ENCODE measurements at regions of chr4 and their contacts with region 1.

Region 1: GRCh38 chr4:75653845-75654503 is 19.2 kb downstream of the G3BP2 start:
- DNase-seq: peak in 3 of 14 experiments; percentile 27 to 34 (median 29)
- ATAC-seq: no peak
- H3K4me3 ChIP-seq: no peak overlapping the region
- H3K4me3 Mint-ChIP-seq: no peak overlapping the region
- H3K27ac ChIP-seq: peak overlapping the region in 1 of 2 donors; percentile 9
- H3K27ac Mint-ChIP-seq: peak overlapping the region; percentile 78
- H3K4me1 ChIP-seq: peaks cover 5% of the 10 kb centered on the region
- H3K4me1 Mint-ChIP-seq: peaks cover 53% of the 10 kb centered on the region
- H3K27me3 ChIP-seq: no peaks in the 10 kb centered on the region
- H3K27me3 Mint-ChIP-seq: no peaks in the 10 kb centered on the region
- CTCF ChIP-seq: peak; percentile 29

Region 2: GRCh38 chr4:75698162-75698962 is 44.4 kb after region 1 on chr4:
- CTCF ChIA-PET with region 1: interaction called, 3 read pairs
- POLR2A ChIA-PET with region 1: no interaction called
- intact Hi-C with region 1: loop called in 1 of 2 experiments (anchors 5 kb)
- DNase-seq: peak in 3 of 14 experiments; percentile 41 to 62 (median 57)
- ATAC-seq: peak; percentile 20
- H3K4me3 ChIP-seq: no peak overlapping the region
- H3K4me3 Mint-ChIP-seq: no peak overlapping the region
- H3K27ac ChIP-seq: peak overlapping the region; percentile 15 to 35
- H3K27ac Mint-ChIP-seq: peak overlapping the region; percentile 52
- H3K4me1 ChIP-seq: peaks cover 23% of the 10 kb centered on the region
- H3K4me1 Mint-ChIP-seq: peaks cover 45% of the 10 kb centered on the region
- H3K27me3 ChIP-seq: no peaks in the 10 kb centered on the region
- H3K27me3 Mint-ChIP-seq: no peaks in the 10 kb centered on the region
- CTCF ChIP-seq: no peak

Region 3: GRCh38 chr4:75708218-75708691 is 54.3 kb after region 1 on chr4:
- CTCF ChIA-PET with region 1: no interaction called
- POLR2A ChIA-PET with region 1: interaction called, 4 read pairs
- intact Hi-C with region 1: loop called (anchors 1 to 5 kb)
- DNase-seq: peak in 12 of 14 experiments; percentile 12 to 74 (median 34)
- ATAC-seq: peak; percentile 94
- H3K4me3 ChIP-seq: no peak overlapping the region
- H3K4me3 Mint-ChIP-seq: no peak overlapping the region
- H3K27ac ChIP-seq: no peak overlapping the region
- H3K27ac Mint-ChIP-seq: peak overlapping the region; percentile 77
- H3K4me1 ChIP-seq: peaks cover 3% of the 10 kb centered on the region
- H3K4me1 Mint-ChIP-seq: peaks cover 8% of the 10 kb centered on the region
- H3K27me3 ChIP-seq: no peaks in the 10 kb centered on the region
- H3K27me3 Mint-ChIP-seq: no peaks in the 10 kb centered on the region
- CTCF ChIP-seq: peak; percentile 66

Region 4: DNA sequence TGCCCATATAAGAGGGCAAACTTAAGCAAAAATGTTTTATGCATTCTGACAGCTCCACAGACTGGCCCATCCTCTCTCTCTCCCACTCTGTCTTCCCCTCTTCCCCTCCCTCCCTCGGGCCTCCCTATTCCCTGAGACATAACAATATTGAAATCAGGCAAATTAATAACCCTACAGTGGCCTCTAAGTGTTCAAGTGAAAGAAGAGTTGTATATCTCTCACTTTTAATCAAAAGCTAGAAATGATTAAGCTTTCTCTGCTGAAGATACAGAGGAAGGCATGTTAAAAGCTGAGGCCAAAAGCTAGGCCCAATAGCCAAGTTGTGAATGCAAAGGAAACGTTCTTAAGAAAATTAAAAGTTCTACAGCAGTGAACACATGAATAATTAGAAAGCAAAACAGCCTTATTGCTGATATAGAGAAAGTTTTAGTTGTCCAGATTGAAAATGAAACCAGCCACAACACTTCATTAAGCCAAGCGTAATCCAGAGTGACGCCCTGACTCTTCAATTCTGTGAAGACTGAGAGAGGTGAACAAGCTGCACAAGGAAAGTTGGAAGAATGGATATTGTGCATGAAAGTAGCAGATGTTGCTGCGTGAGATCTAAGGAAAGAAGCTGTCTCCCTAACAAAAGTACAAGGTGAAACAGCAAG is 125.3 kb after region 1 on chr4:
- CTCF ChIA-PET with region 1: no interaction called
- POLR2A ChIA-PET with region 1: no interaction called
- intact Hi-C with region 1: loop called in 1 of 2 experiments (anchors 5 kb)
- DNase-seq: no peak
- ATAC-seq: no peak
- H3K4me3 ChIP-seq: no peak overlapping the region
- H3K4me3 Mint-ChIP-seq: no peak overlapping the region
- H3K27ac ChIP-seq: no peak overlapping the region
- H3K27ac Mint-ChIP-seq: no peak overlapping the region
- H3K4me1 ChIP-seq: no peaks in the 10 kb centered on the region
- H3K4me1 Mint-ChIP-seq: no peaks in the 10 kb centered on the region
- H3K27me3 ChIP-seq: no peaks in the 10 kb centered on the region
- H3K27me3 Mint-ChIP-seq: no peaks in the 10 kb centered on the region
- CTCF ChIP-seq: no peak

Region 5: DNA sequence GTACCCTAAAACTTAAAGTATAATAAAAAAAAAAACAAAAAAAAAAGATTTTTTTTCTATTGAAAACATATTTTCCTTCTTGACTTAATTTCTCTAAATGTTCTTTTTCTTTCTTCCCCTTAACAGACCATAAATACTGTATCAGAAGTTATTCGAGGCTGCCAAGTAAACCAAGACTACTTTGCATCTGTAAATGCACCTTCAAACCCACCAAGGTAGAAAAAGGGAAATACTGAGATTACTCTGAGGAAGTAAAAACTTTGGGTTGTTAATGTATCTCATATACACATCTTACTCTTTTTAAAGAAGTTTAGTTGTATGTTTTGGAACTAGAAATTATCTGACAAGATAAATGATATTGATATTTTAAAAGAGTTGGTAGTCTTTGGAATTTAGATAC is 136.1 kb after region 1 on chr4:
- CTCF ChIA-PET with region 1: no interaction called
- POLR2A ChIA-PET with region 1: no interaction called
- intact Hi-C with region 1: no loop called
- DNase-seq: no peak
- ATAC-seq: no peak
- H3K4me3 ChIP-seq: no peak overlapping the region
- H3K4me3 Mint-ChIP-seq: no peak overlapping the region
- H3K27ac ChIP-seq: no peak overlapping the region
- H3K27ac Mint-ChIP-seq: no peak overlapping the region
- H3K4me1 ChIP-seq: no peaks in the 10 kb centered on the region
- H3K4me1 Mint-ChIP-seq: no peaks in the 10 kb centered on the region
- H3K27me3 ChIP-seq: no peaks in the 10 kb centered on the region
- H3K27me3 Mint-ChIP-seq: no peaks in the 10 kb centered on the region
- CTCF ChIP-seq: no peak

Measured in CD4-positive, alpha-beta T cell (primary cell).